K562 (cell line): ENCODE measurements at regions of chr19 and their contacts with region 1.

Region 1: GRCh38 chr19:18419195-18419698 is at the start of gene SSBP4:
- DNase-seq: peak; percentile 84 to 95 (median 88)
- ATAC-seq: peak; percentile 13
- H3K4me3 ChIP-seq: peak within 1 kb of the TSS; percentile 60
- H3K27ac ChIP-seq: peak within 1 kb of the TSS; percentile 97
- H3K4me1 ChIP-seq: peaks cover 54 to 96% of the 10 kb centered on the region in 2 experiments
- H3K27me3 ChIP-seq: no peaks in the 10 kb centered on the region
- CTCF ChIP-seq: peak; percentile 17 to 95 (median 66); a peak in 4 of 6 replicates
- EP300 ChIP-seq: peak; percentile 63
- POLR2A ChIP-seq: no peak
- RAD21 ChIP-seq: peak in 1 of 2 experiments; percentile 67; a peak in 3 of 4 replicates
- polyA plus RNA-seq, gene SSBP4: 1.1 to 1.9 TPM

Region 2: DNA sequence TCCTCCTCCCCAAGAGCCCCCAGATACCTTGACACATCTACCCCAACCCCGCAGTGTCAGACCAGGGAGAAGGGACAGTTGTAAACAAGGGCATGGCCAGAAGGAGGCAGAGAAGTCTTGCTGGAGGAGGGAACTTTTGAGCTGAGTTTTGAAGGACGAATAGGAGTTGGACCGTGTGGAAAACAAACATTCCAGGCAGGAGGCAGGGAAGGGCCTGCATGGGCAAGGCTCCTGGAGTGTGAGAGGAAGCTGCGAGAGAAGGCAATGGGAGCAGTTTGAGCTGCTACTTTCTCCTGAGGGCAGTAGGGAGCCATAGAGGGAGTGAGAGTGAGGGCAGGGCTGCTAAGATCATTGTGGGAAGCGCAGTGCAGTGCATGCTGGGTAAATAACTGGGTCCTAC is 355.8 kb before region 1 on chr19:
- CTCF ChIA-PET with region 1: no interaction called
- POLR2A ChIA-PET with region 1: no interaction called
- in situ Hi-C with region 1: no loop called
- intact Hi-C with region 1: loop called (anchors 5 kb)
- DNase-seq: peak; percentile 35 to 65 (median 40)
- ATAC-seq: 0 out of 3 replicates have a peak, but pooled peaks have one; percentile 20
- H3K4me3 ChIP-seq: no peak overlapping the region
- H3K27ac ChIP-seq: no peak overlapping the region
- H3K4me1 ChIP-seq: peaks cover 8 to 22% of the 10 kb centered on the region in 2 experiments; a peak in 4 of 5 replicates
- H3K27me3 ChIP-seq: no peaks in the 10 kb centered on the region
- CTCF ChIP-seq: peak; percentile 64 to 73 (median 71)
- EP300 ChIP-seq: no peak
- POLR2A ChIP-seq: no peak
- RAD21 ChIP-seq: peak; percentile 58 to 69

Region 3: GRCh38 chr19:18097217-18097992 is 321.8 kb before region 1 on chr19 and contains the start of gene MAST3:
- CTCF ChIA-PET with region 1: no interaction called
- POLR2A ChIA-PET with region 1: no interaction called
- in situ Hi-C with region 1: loop called (anchors 10 kb)
- intact Hi-C with region 1: no loop called
- DNase-seq: peak; percentile 94 to 100 (median 99)
- ATAC-seq: peak; percentile 97
- H3K4me3 ChIP-seq: peak within 1 kb of the TSS; percentile 47
- H3K27ac ChIP-seq: peak within 1 kb of the TSS; percentile 55
- H3K4me1 ChIP-seq: peaks cover 20 to 42% of the 10 kb centered on the region in 2 experiments; a peak in 4 of 5 replicates
- H3K27me3 ChIP-seq: no peaks in the 10 kb centered on the region
- CTCF ChIP-seq: 0 out of 6 replicates have a peak, but pooled peaks of 2 of the 3 experiments have one; percentile 13 to 16
- EP300 ChIP-seq: no peak
- POLR2A ChIP-seq: no peak
- RAD21 ChIP-seq: no peak
- polyA plus RNA-seq, gene MAST3: 0.94 to 2.5 TPM

Region 4: DNA sequence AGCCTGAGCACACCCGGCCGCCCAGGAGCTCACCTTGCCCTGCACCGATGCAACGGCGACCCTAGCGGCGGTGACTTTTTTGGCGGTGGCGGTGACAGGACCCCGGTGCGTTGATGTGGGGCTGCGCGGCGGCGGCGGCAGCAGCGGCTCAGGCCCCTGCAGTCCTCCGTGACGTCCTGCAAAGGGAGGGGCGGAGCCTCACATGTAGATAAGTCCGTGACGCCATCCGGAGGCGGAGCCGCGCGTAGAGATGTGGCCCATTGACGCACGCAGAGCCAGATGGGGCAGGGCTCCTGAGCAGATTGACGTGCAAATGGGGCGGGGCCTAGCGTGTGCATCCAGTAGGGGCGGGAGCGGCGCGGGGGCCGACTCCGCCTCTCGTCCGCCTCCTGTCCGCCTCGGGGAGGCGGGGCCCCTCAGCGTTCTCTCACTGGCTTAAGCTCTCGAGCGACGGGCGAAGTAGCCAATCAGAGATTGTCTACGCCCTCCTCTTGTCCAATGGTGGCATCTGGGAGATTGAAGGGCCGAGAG is 215.3 kb before region 1 on chr19 and contains the start of gene RAB3A:
- CTCF ChIA-PET with region 1: interaction called, 3 read pairs
- POLR2A ChIA-PET with region 1: interaction called, 3 read pairs
- in situ Hi-C with region 1: no loop called
- intact Hi-C with region 1: loop called (anchors 5 kb)
- DNase-seq: peak; percentile 96 to 100 (median 98)
- ATAC-seq: peak; percentile 96
- H3K4me3 ChIP-seq: peak within 1 kb of the TSS; percentile 68
- H3K27ac ChIP-seq: peak within 1 kb of the TSS; percentile 86
- H3K4me1 ChIP-seq: peaks cover 14 to 45% of the 10 kb centered on the region in 2 experiments; a peak in 4 of 5 replicates
- H3K27me3 ChIP-seq: no peaks in the 10 kb centered on the region
- CTCF ChIP-seq: 0 out of 6 replicates have a peak, but pooled peaks of 1 of the 3 experiments have one; percentile 2
- EP300 ChIP-seq: no peak
- POLR2A ChIP-seq: no peak
- RAD21 ChIP-seq: no peak
- polyA plus RNA-seq, gene RAB3A: 0.17 TPM in 1 of 2 experiments, not detected in the other

Region 5: GRCh38 chr19:18401580-18402112 is 17.6 kb before region 1 on chr19:
- CTCF ChIA-PET with region 1: interaction called, 3 read pairs
- POLR2A ChIA-PET with region 1: interaction called, 16 read pairs
- in situ Hi-C with region 1: no loop called
- intact Hi-C with region 1: no loop called
- DNase-seq: peak; percentile 39 to 85 (median 56)
- ATAC-seq: peak; percentile 94
- H3K4me3 ChIP-seq: no peak overlapping the region
- H3K27ac ChIP-seq: peak overlapping the region; percentile 52; the same call in 1 of the 3 replicates
- H3K4me1 ChIP-seq: peaks cover 12 to 21% of the 10 kb centered on the region in 2 experiments
- H3K27me3 ChIP-seq: no peaks in the 10 kb centered on the region
- CTCF ChIP-seq: peak; percentile 69 to 77 (median 71)
- EP300 ChIP-seq: no peak
- POLR2A ChIP-seq: no peak
- RAD21 ChIP-seq: peak; percentile 58 to 61